Right lobe of liver (tissue), 6 donors: ENCODE measurements at regions of chr17 and their contacts with region 1.

Region 1: DNA sequence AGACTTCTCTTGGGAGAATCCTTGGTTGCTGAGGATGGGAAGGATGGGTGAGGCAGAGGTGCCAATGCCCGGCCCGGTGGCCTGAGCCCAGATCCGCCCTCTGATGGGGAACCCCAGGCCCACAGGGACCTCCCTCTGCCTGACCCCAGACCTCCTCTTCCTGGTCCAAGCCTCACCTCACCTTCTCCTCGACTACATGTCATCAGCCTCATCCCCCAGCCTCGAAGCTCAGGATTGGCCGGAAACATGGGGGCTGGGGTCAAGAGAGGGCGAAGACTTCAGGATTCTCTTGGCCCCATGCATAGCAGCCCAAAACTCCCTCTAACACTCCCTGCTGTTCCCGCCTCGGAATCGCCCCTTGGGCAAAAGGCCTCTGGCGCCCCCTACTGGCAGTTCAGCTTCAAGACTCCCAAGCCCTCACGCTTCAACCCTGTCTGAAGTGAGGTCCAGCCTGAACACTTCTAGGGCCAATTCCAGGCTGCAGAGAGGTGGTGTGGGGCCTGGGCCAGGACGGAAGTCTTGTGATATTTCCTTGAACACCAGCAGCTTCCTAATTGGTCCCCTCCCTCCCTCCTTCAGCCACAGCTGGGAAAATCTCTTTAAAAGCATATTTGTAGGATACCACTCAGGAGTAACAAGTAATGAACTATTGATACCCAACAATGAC is 47.2 kb downstream of the ARHGAP27 start:
- DNase-seq: peak; percentile 90 to 92 (median 90)
- ATAC-seq: peak; percentile 95 to 98 (median 97)
- H3K4me3 ChIP-seq: no peak overlapping the region
- H3K27ac ChIP-seq: no peak overlapping the region
- H3K4me1 ChIP-seq: peaks cover 0 to 10% (median 4%) of the 10 kb centered on the region in 4 donors
- H3K27me3 ChIP-seq: no peaks in the 10 kb centered on the region
- CTCF ChIP-seq: peak; percentile 96 to 98 (median 96)
- POLR2A ChIP-seq: no peak

Region 2: GRCh38 chr17:45221066-45221996 is 164.1 kb before region 1 on chr17 and contains the start of gene FMNL1:
- intact Hi-C with region 1: loop called (anchors 2 to 10 kb)
- DNase-seq: peak; percentile 69 to 82 (median 70)
- ATAC-seq: peak; percentile 23 to 41 (median 32)
- H3K4me3 ChIP-seq: peak within 1 kb of the TSS; percentile 27 to 56 (median 31)
- H3K27ac ChIP-seq: peak within 1 kb of the TSS; percentile 15 to 60 (median 54)
- H3K4me1 ChIP-seq: no peaks in the 10 kb centered on the region
- H3K27me3 ChIP-seq: no peaks in the 10 kb centered on the region
- CTCF ChIP-seq: no peak
- POLR2A ChIP-seq: peak; percentile 16
- total RNA-seq, gene FMNL1: 3.7 to 10.0 (median 5.1) TPM

Region 3: GRCh38 chr17:45228763-45229539 is 156.5 kb before region 1 on chr17:
- intact Hi-C with region 1: loop called in 1 of 2 experiments (anchors 10 kb)
- DNase-seq: peak; percentile 78 to 88 (median 82)
- ATAC-seq: peak; percentile 49 to 62 (median 54)
- H3K4me3 ChIP-seq: no peak overlapping the region
- H3K27ac ChIP-seq: peak overlapping the region; percentile 21 to 77 (median 67)
- H3K4me1 ChIP-seq: no peaks in the 10 kb centered on the region
- H3K27me3 ChIP-seq: no peaks in the 10 kb centered on the region
- CTCF ChIP-seq: no peak
- POLR2A ChIP-seq: no peak

Region 4: DNA sequence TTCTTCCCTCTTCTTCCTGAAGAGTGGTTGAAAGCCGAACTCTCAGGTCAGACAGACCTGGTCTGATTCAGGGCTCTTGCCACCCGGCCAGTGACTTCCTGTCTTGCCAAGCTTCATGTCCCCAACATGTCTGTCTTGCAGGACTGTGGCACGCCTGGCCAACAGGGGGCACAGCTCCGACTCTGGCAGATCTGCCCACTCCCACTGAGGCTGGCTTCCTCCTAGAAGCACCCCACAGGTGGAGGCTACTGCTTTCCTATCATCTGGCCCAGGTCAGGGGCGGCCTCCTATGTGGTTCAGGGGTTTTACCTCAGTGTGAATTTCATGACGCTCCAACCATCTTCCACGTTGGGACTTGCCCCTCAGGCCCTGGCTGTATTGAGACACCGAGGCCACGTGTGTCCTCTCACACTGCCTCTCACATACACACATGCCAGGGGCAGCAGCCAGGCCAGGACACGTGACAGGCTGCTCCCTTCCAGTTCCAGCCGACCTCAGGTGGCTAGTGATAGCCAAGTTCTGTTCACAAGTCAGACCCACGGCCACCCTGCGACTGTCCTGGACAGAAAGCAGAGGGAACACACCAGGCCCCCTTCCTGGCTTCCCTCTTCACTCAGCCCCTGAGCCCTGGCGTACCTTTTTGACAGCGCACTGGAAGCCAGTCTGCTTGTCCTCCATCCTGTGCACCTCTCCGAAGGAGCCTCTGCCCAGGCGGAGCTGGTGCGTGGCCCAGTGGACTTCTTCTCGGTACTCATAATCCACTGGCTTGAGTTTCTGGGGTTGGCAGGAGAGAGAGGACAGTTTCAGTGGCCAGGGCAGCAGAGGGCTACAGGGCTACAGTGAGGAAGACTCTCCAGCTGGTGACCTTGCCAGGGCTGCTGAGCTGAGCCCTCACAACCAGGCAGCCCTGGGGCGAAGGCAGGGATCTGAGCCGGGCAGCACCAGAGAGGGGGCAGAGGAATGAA is 101.0 kb before region 1 on chr17:
- intact Hi-C with region 1: loop called in 1 of 2 experiments (anchors 5 kb)
- DNase-seq: peak; percentile 78 to 91 (median 78)
- ATAC-seq: peak; percentile 70 to 86 (median 82)
- H3K4me3 ChIP-seq: no peak overlapping the region
- H3K27ac ChIP-seq: peak overlapping the region in 2 of 3 donors; percentile 5 to 50
- H3K4me1 ChIP-seq: peaks cover 0 to 25% (median 10%) of the 10 kb centered on the region in 4 donors
- H3K27me3 ChIP-seq: no peaks in the 10 kb centered on the region
- CTCF ChIP-seq: peak in 3 of 4 donors; percentile 12 to 33 (median 14)
- POLR2A ChIP-seq: no peak

Region 5: DNA sequence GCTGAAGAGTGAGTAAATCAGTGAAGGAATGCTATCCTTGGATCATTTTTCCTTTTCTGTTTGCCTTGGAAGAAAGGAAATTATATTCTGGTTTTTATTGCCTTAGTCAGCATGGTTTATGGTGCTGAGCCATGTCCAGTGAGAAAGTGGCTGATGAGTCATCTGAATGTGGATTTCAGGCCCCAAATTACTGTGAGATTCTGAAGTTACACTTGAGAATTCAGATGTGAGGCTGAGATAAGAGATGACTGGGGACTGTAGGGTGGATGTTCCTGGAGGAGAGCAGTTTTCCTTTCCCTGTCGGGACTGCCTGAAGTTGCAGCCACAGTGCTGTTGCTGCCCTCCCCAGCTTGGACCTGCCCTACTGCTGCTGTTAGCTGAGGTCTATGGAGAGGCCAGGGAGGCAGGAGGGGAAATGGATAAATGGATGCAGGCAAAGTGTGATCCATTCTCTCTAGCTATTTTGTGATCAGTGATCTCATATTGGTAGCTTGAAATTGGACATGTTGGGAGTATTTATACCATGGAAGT is 64.5 kb before region 1 on chr17:
- intact Hi-C with region 1: loop called in 1 of 2 experiments (anchors 10 kb)
- DNase-seq: no peak
- ATAC-seq: no peak
- H3K4me3 ChIP-seq: no peak overlapping the region
- H3K27ac ChIP-seq: no peak overlapping the region
- H3K4me1 ChIP-seq: peaks cover 0 to 1% (median 0%) of the 10 kb centered on the region in 4 donors
- H3K27me3 ChIP-seq: no peaks in the 10 kb centered on the region
- CTCF ChIP-seq: no peak
- POLR2A ChIP-seq: no peak